Right ventricle myocardium superior (tissue), 1 donor: ENCODE measurements at regions of chr1 and their contacts with region 1.

Region 1: DNA sequence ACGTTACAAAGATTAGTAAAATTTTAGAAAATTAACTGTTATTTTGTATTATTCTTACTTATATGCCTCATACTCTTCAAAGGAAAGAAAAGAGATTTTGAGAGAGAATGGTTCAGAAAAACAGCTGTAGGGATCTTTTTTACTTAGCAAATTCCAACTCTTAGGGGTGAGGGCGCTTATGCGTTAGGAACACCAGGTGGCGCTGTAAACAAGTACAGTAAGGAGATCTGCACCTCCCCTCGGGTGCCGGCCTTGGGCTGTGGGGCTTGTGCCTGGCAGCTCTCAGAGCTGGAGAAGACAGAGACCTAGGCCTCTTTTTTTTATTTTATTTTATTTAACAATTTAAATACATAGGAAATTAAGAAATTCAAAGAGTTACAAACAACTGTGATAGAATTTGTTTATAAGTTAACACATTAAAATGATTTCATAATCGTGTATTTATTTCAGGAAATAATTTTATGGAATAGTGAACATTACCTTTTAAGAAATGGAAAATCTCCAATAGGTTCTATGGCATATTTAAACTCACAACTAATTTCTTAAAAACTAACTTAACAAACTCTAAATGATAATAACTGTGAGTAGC is 32.6 kb downstream of the UTP25 start:
- DNase-seq: peak; percentile 79
- ATAC-seq: peak; percentile 85

Region 2: DNA sequence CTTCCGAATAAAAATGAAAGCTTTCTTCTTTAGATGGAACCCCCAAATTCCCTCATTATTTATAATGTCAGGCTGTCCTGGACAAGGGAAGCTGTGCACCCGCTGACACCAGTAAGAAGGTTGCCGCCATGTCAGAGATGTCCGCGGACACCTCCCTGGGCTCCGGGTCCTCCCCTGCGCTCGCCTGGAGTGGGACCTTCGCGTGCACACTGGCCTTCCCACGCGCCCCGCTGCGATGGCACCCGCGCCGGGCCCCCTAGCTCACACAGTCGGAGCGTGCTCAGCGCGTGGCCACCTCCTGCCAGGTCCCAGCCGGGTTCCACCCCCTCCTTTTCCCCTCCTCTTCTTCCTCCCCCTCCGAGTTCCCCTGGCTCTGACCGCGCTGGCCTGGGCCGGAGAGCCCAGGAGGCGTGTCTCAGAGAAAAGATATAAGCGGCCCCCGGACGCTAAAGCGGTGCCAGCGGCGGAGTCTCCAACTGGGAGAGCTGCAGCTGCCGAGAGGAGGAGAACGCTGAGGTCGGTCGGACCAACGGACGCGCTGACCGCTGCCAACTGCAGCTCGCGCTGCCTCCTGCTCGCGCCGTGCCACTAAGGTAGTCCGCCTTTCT is 185.3 kb before region 1 on chr1 and contains the start of gene G0S2:
- intact Hi-C with region 1: no loop called
- DNase-seq: peak; percentile 92
- ATAC-seq: peak; percentile 89
- total RNA-seq, gene G0S2: 453 TPM

Region 3: GRCh38 chr1:209989525-209989924 is 129.1 kb after region 1 on chr1:
- intact Hi-C with region 1: loop called (anchors 5 kb)
- DNase-seq: no peak
- ATAC-seq: no peak